CD8-positive, alpha-beta T cell (primary cell): ENCODE measurements at regions of chr1 and their contacts with region 1.

Region 1: DNA sequence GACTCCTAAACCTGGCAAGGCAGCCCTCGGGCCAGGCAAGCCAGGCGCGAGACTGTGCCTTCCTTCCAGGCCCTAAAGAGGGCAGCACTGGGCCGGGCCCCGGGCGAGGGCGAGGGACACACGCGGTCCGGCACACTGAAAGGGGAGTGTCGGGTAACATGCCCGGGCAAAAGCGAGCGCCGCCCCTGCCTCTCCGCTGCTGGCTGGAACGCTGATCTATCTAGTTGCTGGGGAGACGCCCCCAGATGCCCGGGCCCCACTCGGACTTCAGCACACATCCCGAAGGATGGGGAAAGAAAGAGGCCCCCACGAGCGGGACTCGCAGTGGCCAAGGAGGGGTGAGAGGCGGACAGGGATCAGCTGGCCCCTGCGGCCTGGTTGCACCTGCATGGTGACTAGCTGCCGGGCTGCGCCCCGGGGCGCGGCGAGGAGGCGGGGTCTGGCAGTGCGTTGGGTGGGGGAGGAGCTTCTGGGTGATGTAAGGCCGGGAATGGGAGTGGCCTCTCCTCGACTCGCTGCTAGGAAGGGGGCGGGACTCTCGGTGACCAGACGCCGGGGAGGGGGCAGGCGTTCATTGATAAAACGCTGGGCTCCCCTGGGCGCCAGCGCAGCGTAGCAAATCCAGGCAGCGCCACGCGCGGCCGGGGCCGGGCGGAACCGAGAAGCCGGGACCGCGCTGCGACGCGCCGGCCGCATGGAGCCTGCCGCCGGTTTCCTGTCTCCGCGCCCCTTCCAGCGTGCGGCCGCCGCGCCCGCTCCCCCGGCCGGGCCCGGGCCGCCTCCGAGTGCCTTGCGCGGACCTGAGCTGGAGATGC is at the start of gene PLK3:
- DNase-seq: peak; percentile 97 to 99 (median 98)
- ATAC-seq: peak; percentile 83
- H3K4me3 ChIP-seq: peak within 1 kb of the TSS; percentile 79 to 95
- H3K4me3 Mint-ChIP-seq: peak within 1 kb of the TSS; percentile 87
- H3K27ac ChIP-seq: peak within 1 kb of the TSS; percentile 91 to 98
- H3K27ac Mint-ChIP-seq: peak within 1 kb of the TSS; percentile 98
- H3K4me1 ChIP-seq: peaks cover 29% of the 10 kb centered on the region
- H3K4me1 Mint-ChIP-seq: peaks cover 37% of the 10 kb centered on the region
- H3K27me3 ChIP-seq: no peaks in the 10 kb centered on the region
- H3K27me3 Mint-ChIP-seq: no peaks in the 10 kb centered on the region
- CTCF ChIP-seq: peak; percentile 81
- total RNA-seq, gene PLK3: 568 to 599 TPM

Region 2: DNA sequence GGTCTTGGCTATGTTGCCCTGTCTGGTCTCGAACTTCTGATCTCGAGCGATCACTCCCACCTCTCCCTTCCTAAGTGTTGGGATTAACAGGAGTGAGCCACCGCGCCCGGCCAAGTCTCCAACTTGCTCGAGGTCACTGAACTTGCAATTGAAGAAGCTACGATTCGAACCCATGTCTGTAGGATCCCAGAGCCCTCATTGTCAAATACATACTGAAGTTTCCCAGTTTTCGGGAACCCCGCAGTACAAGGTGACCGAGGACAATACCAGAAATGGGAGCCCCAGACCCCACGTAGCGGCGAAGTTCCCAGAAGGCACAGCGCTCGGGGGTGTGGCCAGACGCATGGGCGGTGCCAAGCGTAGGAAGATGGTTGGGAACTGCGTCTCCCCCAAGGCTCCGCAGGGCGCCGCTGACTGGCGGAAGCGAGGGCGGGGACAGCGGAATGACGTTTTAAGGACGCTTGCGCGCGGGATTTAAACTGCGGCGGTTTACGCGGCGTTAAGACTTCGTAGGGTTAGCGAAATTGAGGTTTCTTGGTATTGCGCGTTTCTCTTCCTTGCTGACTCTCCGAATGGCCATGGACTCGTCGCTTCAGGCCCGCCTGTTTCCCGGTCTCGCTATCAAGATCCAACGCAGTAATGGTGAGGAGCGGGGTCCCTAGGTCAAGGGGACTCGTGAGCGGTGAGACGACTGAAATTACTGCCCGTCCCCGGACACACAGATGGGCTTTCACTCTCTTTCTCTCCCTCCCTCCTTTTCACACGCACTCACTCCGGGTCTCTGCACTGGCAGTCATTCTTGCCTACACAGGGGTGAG is 60.4 kb before region 1 on chr1 and contains the start of gene KIF2C:
- CTCF ChIA-PET with region 1: interaction called, 3 read pairs
- POLR2A ChIA-PET with region 1: no interaction called
- intact Hi-C with region 1: loop called in 1 of 2 experiments (anchors 2 kb)
- DNase-seq: peak; percentile 93 to 98 (median 96)
- ATAC-seq: peak; percentile 100
- H3K4me3 ChIP-seq: peak within 1 kb of the TSS; percentile 81 to 84
- H3K4me3 Mint-ChIP-seq: peak within 1 kb of the TSS; percentile 93
- H3K27ac ChIP-seq: peak within 1 kb of the TSS; percentile 69 to 88
- H3K27ac Mint-ChIP-seq: peak within 1 kb of the TSS; percentile 97
- H3K4me1 ChIP-seq: peaks cover 12% of the 10 kb centered on the region
- H3K4me1 Mint-ChIP-seq: peaks cover 17% of the 10 kb centered on the region
- H3K27me3 ChIP-seq: no peaks in the 10 kb centered on the region
- H3K27me3 Mint-ChIP-seq: no peaks in the 10 kb centered on the region
- CTCF ChIP-seq: no peak
- total RNA-seq, gene KIF2C: 0.58 to 0.81 TPM

Region 3: DNA sequence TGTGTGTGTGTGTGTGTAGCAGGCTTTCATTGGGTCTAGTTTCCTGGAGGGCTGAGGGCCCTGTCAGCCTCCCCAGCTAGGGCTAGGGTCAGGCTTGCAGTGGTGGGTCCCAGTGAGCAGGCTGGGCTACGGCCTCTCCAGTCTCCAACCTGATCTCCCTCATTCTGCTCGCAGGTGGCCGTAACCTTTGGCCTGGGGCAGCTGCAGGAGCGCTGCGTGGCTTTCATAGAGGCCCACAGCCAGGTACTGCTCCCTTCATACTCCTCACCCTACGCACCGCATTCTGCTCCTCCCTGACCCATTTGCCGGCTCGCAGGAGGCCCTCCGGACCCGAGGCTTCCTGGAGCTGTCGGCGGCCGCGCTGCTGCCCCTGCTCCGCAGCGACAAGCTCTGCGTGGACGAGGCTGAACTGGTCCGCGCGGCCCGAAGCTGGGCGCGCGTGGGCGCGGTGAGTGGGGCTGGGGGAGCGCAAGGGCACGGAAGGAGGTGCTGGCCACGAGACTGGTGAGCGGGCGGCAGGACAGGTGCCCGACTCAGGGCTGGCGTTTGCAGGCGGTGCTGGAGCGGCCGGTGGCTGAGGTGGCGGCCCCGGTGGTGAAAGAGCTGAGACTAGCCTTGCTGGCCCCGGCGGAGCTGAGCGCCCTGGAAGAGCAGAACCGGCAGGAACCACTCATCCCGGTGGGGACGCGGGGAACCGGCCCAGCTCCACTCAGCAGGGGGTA is 13.0 kb after region 1 on chr1:
- CTCF ChIA-PET with region 1: interaction called, 33 read pairs
- POLR2A ChIA-PET with region 1: interaction called, 189 read pairs
- intact Hi-C with region 1: loop called in 1 of 2 experiments (anchors 2 kb)
- DNase-seq: peak in 2 of 9 experiments; percentile 27 to 50
- ATAC-seq: no peak
- H3K4me3 ChIP-seq: peak overlapping the region; percentile 59 to 74
- H3K4me3 Mint-ChIP-seq: peak overlapping the region; percentile 84
- H3K27ac ChIP-seq: peak overlapping the region in 1 of 2 experiments; percentile 85
- H3K27ac Mint-ChIP-seq: peak overlapping the region; percentile 99
- H3K4me1 ChIP-seq: peaks cover 62% of the 10 kb centered on the region
- H3K4me1 Mint-ChIP-seq: peaks cover 67% of the 10 kb centered on the region
- H3K27me3 ChIP-seq: no peaks in the 10 kb centered on the region
- H3K27me3 Mint-ChIP-seq: no peaks in the 10 kb centered on the region
- CTCF ChIP-seq: no peak

Region 4: GRCh38 chr1:44835738-44836675 is 36.0 kb after region 1 on chr1:
- CTCF ChIA-PET with region 1: interaction called, 12 read pairs
- POLR2A ChIA-PET with region 1: interaction called, 3 read pairs
- intact Hi-C with region 1: loop called (anchors 2 kb)
- DNase-seq: peak; percentile 68 to 91 (median 85)
- ATAC-seq: peak; percentile 98
- H3K4me3 ChIP-seq: no peak overlapping the region
- H3K4me3 Mint-ChIP-seq: peak overlapping the region; percentile 16
- H3K27ac ChIP-seq: no peak overlapping the region
- H3K27ac Mint-ChIP-seq: no peak overlapping the region
- H3K4me1 ChIP-seq: no peaks in the 10 kb centered on the region
- H3K4me1 Mint-ChIP-seq: peaks cover 9% of the 10 kb centered on the region
- H3K27me3 ChIP-seq: no peaks in the 10 kb centered on the region
- H3K27me3 Mint-ChIP-seq: peaks cover 4% of the 10 kb centered on the region
- CTCF ChIP-seq: peak; percentile 73